Common myeloid progenitor, CD34-positive (primary cell): ENCODE measurements at regions of chr1 and their contacts with region 1.

Region 1: GRCh38 chr1:68585351-68585750 is 88.5 kb upstream of the DEPDC1 start:
- DNase-seq: no peak
- H3K4me3 ChIP-seq: no peak overlapping the region
- H3K27ac ChIP-seq: no peak overlapping the region
- H3K4me1 ChIP-seq: no peaks in the 10 kb centered on the region
- H3K27me3 ChIP-seq: no peaks in the 10 kb centered on the region

Region 2: DNA sequence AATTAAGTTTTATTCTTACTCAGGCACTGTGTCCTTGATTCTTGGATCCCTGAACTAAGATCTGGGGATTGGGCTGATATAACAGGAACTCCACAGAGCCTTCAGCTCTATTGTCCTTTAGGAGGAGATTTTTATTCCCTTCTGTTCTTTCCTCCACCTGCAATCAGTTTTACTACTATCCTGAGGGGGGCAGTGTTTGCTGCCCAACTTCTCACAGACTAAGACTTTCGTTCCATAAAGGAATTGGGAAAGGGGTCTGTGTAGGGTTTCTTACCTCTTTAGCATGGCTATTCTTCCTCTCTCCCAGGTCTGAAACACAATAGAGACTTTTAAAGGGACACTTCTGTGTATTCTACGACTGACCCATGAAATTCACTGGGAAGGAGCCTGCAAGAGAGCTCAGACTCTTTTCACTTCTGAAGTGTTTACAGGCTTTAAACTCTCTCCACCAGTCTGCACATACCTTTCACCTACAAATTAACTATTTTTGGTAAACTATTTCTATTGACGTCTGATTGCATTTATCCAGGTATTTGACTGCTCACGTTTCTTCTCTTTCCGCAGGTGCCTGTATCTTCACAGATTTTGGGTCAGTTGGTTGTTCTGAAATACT is 14.8 kb after region 1 on chr1:
- CTCF ChIA-PET with region 1: interaction called, 10 read pairs
- POLR2A ChIA-PET with region 1: no interaction called
- DNase-seq: peak; percentile 11 to 31 (median 26)
- H3K4me3 ChIP-seq: peak overlapping the region in 1 of 7 experiments; percentile 11
- H3K27ac ChIP-seq: no peak overlapping the region
- H3K4me1 ChIP-seq: no peaks in the 10 kb centered on the region
- H3K27me3 ChIP-seq: no peaks in the 10 kb centered on the region

Region 3: GRCh38 chr1:68696221-68696620 is 110.9 kb after region 1 on chr1:
- CTCF ChIA-PET with region 1: no interaction called
- POLR2A ChIA-PET with region 1: no interaction called
- DNase-seq: no peak
- H3K4me3 ChIP-seq: no peak overlapping the region
- H3K27ac ChIP-seq: no peak overlapping the region
- H3K4me1 ChIP-seq: no peaks in the 10 kb centered on the region
- H3K27me3 ChIP-seq: no peaks in the 10 kb centered on the region